ENCODE measurements at regions of chr18 and their contacts with region 1.

Region 1: GRCh38 chr18:11980555-11981382 is 538 bp upstream of the IMPA2 start:
- DNase-seq: peak; percentile 96
- ATAC-seq: peak; percentile 91
- H3K4me3 Mint-ChIP-seq: peak overlapping the region; percentile 85
- H3K27ac Mint-ChIP-seq: peak overlapping the region; percentile 46
- H3K4me1 Mint-ChIP-seq: peaks cover 18% of the 10 kb centered on the region
- H3K27me3 Mint-ChIP-seq: no peaks in the 10 kb centered on the region
- CTCF ChIP-seq: no peak

Region 2: DNA sequence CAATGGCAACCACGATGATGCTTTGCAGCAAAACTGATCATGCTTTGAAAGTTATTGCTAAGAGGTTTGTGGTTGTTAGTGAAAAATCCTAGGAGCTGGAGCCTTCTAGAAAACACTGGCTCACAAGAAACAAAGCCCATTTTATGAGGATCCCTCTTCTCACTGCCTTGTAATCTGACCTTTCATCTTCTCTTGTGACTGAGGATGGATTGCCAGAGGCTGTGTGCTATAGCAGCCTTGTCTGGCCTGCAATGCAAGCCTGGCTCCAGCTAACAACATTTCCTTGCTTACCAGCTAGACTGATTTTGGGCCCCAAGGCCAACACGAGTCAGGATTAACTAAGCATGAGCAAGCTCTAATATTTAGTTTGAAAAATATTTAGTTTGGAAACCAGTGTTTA is 844.5 kb before region 1 on chr18:
- CTCF ChIA-PET with region 1: no interaction called
- POLR2A ChIA-PET with region 1: no interaction called
- intact Hi-C with region 1: no loop called
- DNase-seq: no peak
- ATAC-seq: no peak
- H3K4me3 Mint-ChIP-seq: no peak overlapping the region
- H3K27ac Mint-ChIP-seq: no peak overlapping the region
- H3K4me1 Mint-ChIP-seq: no peaks in the 10 kb centered on the region
- H3K27me3 Mint-ChIP-seq: peaks cover 2% of the 10 kb centered on the region
- CTCF ChIP-seq: no peak

Region 3: GRCh38 chr18:11851146-11851805 is 129.5 kb before region 1 on chr18 and contains the start of gene CHMP1B:
- CTCF ChIA-PET with region 1: no interaction called
- POLR2A ChIA-PET with region 1: interaction called, 12 read pairs
- intact Hi-C with region 1: loop called (anchors 1 kb)
- DNase-seq: peak; percentile 98
- ATAC-seq: peak; percentile 94
- H3K4me3 Mint-ChIP-seq: peak within 1 kb of the TSS; percentile 100
- H3K27ac Mint-ChIP-seq: peak within 1 kb of the TSS; percentile 99
- H3K4me1 Mint-ChIP-seq: peaks cover 52% of the 10 kb centered on the region
- H3K27me3 Mint-ChIP-seq: no peaks in the 10 kb centered on the region
- CTCF ChIP-seq: no peak
- total RNA-seq, gene CHMP1B: 28.5 and 29.4 TPM in 2 replicates

Region 4: DNA sequence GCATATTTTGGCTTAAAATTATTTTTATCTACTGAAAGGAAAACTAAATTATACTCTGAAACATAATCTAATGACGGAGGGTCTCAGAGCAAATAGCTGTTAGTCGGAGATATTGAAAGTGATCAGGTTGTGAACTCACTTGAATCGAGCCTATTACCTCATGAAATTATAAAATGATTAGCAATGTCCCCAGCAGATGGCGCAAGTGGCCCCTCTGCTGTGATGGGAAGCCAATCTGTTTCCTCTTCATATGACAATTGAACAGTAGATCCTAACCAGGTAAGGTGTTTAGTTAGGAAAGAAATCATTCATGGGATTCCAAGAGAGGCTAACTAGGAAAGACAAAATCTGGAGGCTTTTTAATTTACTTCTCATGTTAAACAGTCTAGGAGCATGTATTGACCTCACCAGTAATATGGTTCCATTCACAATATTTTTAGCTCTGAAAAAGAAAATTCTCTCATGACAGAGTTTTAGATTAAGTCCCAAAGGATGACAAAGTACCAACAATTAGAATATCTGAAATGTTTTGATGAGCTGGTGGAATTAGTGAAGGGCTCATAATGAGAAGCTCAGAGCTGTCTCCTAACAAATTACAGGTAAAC is 42.8 kb before region 1 on chr18:
- CTCF ChIA-PET with region 1: interaction called, 12 read pairs
- POLR2A ChIA-PET with region 1: interaction called, 3 read pairs
- intact Hi-C with region 1: no loop called
- DNase-seq: peak; percentile 47
- ATAC-seq: peak; percentile 62
- H3K4me3 Mint-ChIP-seq: no peak overlapping the region
- H3K27ac Mint-ChIP-seq: no peak overlapping the region
- H3K4me1 Mint-ChIP-seq: no peaks in the 10 kb centered on the region
- H3K27me3 Mint-ChIP-seq: no peaks in the 10 kb centered on the region
- CTCF ChIP-seq: peak; percentile 34

Region 5: GRCh38 chr18:12049978-12050811 is 69.4 kb after region 1 on chr18:
- CTCF ChIA-PET with region 1: no interaction called
- POLR2A ChIA-PET with region 1: interaction called, 7 read pairs
- intact Hi-C with region 1: loop called (anchors 1 kb)
- DNase-seq: peak; percentile 34
- ATAC-seq: peak; percentile 88
- H3K4me3 Mint-ChIP-seq: peak overlapping the region; percentile 70
- H3K27ac Mint-ChIP-seq: peak overlapping the region; percentile 79
- H3K4me1 Mint-ChIP-seq: peaks cover 55% of the 10 kb centered on the region
- H3K27me3 Mint-ChIP-seq: no peaks in the 10 kb centered on the region
- CTCF ChIP-seq: no peak

Region 6: GRCh38 chr18:12066910-12067511 is 86.2 kb after region 1 on chr18:
- CTCF ChIA-PET with region 1: no interaction called
- POLR2A ChIA-PET with region 1: no interaction called
- intact Hi-C with region 1: no loop called
- DNase-seq: no peak
- ATAC-seq: no peak
- H3K4me3 Mint-ChIP-seq: no peak overlapping the region
- H3K27ac Mint-ChIP-seq: no peak overlapping the region
- H3K4me1 Mint-ChIP-seq: no peaks in the 10 kb centered on the region
- H3K27me3 Mint-ChIP-seq: peaks cover 2% of the 10 kb centered on the region
- CTCF ChIP-seq: no peak

Region 7: GRCh38 chr18:12420831-12421421 is 440.2 kb after region 1 on chr18:
- CTCF ChIA-PET with region 1: no interaction called
- POLR2A ChIA-PET with region 1: no interaction called
- intact Hi-C with region 1: loop called (anchors 5 kb)
- DNase-seq: no peak
- ATAC-seq: no peak
- H3K4me3 Mint-ChIP-seq: peak overlapping the region; percentile 69
- H3K27ac Mint-ChIP-seq: no peak overlapping the region
- H3K4me1 Mint-ChIP-seq: peaks cover 15% of the 10 kb centered on the region
- H3K27me3 Mint-ChIP-seq: no peaks in the 10 kb centered on the region
- CTCF ChIP-seq: no peak

Region 8: GRCh38 chr18:13137670-13138419 is 1157.1 kb after region 1 on chr18:
- CTCF ChIA-PET with region 1: no interaction called
- POLR2A ChIA-PET with region 1: no interaction called
- intact Hi-C with region 1: loop called (anchors 5 kb)
- DNase-seq: peak; percentile 43
- ATAC-seq: peak; percentile 87
- H3K4me3 Mint-ChIP-seq: peak overlapping the region; percentile 98
- H3K27ac Mint-ChIP-seq: peak overlapping the region; percentile 97
- H3K4me1 Mint-ChIP-seq: peaks cover 23% of the 10 kb centered on the region
- H3K27me3 Mint-ChIP-seq: no peaks in the 10 kb centered on the region
- CTCF ChIP-seq: no peak

Measured in activated B cell treated with CpG ODN at 0.5 μM for 24 hours (primary cell).